ENCODE measurements at regions of chr1 and their contacts with region 1.

Region 1: GRCh38 chr1:31155216-31155841 is 84.4 kb downstream of the NKAIN1 start:
- DNase-seq: peak; percentile 38 to 77
- H3K4me3 ChIP-seq: peak overlapping the region; percentile 53
- H3K27ac ChIP-seq: peak overlapping the region; percentile 71
- H3K4me1 ChIP-seq: peaks cover 35% of the 10 kb centered on the region
- H3K27me3 ChIP-seq: no peaks in the 10 kb centered on the region
- CTCF ChIP-seq: no peak; the same call in 1 of the 2 replicates

Region 2: DNA sequence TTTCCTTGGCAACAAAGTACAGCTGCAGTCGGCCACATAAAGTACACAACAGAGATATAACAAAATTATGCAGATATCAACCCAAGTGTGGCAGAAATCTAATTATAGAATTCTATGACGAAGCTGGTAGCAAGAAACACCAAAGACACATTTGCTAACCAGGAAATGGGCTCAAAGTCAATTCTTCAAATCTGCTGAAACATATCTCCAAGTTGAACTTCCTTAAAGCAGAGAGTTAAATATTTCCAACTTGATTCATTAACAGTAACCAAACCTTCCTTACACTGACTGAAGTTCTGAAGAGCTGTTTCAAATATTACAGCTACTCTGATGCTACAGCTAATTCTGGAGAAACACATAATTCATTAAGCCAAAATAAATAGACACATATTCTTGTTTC is 179.2 kb before region 1 on chr1:
- CTCF ChIA-PET with region 1: interaction called, 13 read pairs
- POLR2A ChIA-PET with region 1: interaction called, 5 read pairs
- intact Hi-C with region 1: no loop called
- DNase-seq: no peak
- H3K4me3 ChIP-seq: no peak overlapping the region
- H3K27ac ChIP-seq: peak overlapping the region; percentile 11; the same call in 1 of the 2 replicates
- H3K4me1 ChIP-seq: peaks cover 21% of the 10 kb centered on the region
- H3K27me3 ChIP-seq: no peaks in the 10 kb centered on the region
- CTCF ChIP-seq: no peak

Region 3: GRCh38 chr1:31054349-31054748 is 101.0 kb before region 1 on chr1:
- CTCF ChIA-PET with region 1: no interaction called
- POLR2A ChIA-PET with region 1: no interaction called
- intact Hi-C with region 1: no loop called
- DNase-seq: no peak
- H3K4me3 ChIP-seq: no peak overlapping the region
- H3K27ac ChIP-seq: no peak overlapping the region
- H3K4me1 ChIP-seq: 0 out of 2 replicates have a peak, but pooled peaks cover 6% of the 10 kb centered on the region
- H3K27me3 ChIP-seq: no peaks in the 10 kb centered on the region
- CTCF ChIP-seq: no peak

Region 4: DNA sequence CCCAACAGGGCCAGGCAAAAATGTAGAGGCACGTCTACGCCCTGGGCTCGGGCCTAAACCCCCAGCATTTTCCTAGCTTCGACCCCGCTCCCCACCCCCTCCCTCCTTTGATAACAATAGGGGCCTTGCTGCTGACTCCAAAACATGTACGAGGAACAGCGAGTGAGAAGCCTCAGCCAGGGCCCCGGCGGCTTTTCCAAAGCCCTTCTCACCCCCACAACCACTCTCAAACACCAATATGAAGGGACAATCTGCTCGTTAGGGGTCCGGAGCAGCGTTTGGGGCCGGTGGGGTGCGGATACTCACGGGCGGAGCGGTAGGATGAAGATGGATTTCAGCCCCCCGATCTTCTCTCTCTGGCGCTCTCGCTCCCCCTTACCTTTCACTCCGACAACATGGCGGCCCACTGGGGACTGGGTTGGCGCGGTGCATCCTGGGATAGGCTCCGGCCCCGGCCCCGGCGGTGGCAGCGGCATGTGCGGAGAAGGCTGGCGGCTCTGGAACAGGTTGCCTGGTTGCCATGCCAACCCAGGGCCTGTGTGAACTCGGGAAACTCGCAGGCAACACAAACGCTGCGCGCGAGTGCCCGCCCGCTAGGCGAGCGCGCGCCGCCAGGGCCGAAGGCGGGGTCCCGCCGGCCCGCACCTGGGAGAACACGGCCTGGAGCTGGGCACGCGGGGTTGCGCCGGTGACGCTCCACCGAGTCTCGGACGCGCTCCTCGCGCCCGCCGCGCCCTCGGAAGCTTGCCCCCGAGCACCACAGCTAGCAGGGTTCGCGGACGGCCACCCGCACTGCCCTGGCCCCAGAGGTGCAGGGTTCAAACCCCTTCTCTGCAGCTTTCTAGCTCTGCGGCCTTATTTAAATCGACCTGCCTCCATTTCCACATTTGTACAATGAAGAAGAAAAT is 89.8 kb before region 1 on chr1 and contains the start of gene PUM1:
- CTCF ChIA-PET with region 1: interaction called, 3 read pairs
- POLR2A ChIA-PET with region 1: interaction called, 3 read pairs
- intact Hi-C with region 1: loop called (anchors 2 kb)
- DNase-seq: peak; percentile 89 to 99
- H3K4me3 ChIP-seq: peak within 1 kb of the TSS; percentile 85
- H3K27ac ChIP-seq: peak within 1 kb of the TSS; percentile 94
- H3K4me1 ChIP-seq: peaks cover 23% of the 10 kb centered on the region
- H3K27me3 ChIP-seq: no peaks in the 10 kb centered on the region
- CTCF ChIP-seq: no peak
- total RNA-seq, gene PUM1: 99.2 and 117 TPM in 2 replicates

Region 5: GRCh38 chr1:31203215-31203614 is 47.9 kb after region 1 on chr1:
- CTCF ChIA-PET with region 1: no interaction called
- POLR2A ChIA-PET with region 1: no interaction called
- intact Hi-C with region 1: no loop called
- DNase-seq: no peak
- H3K4me3 ChIP-seq: no peak overlapping the region
- H3K27ac ChIP-seq: no peak overlapping the region
- H3K4me1 ChIP-seq: no peaks in the 10 kb centered on the region
- H3K27me3 ChIP-seq: no peaks in the 10 kb centered on the region
- CTCF ChIP-seq: no peak